Heart right ventricle (tissue), 16 donors: ENCODE measurements at regions of chr12 and their contacts with region 1.

Region 1: GRCh38 chr12:7933255-7933729 is 2.7 kb downstream of the SLC2A3 start:
- DNase-seq: peak; percentile 57 to 88
- ATAC-seq: peak; percentile 86 to 94 (median 91)
- H3K4me3 ChIP-seq: peak overlapping the region; percentile 34 to 77 (median 65)
- H3K27ac ChIP-seq: peak overlapping the region; percentile 17 to 99 (median 88)
- H3K4me1 ChIP-seq: peaks cover 0 to 69% (median 7%) of the 10 kb centered on the region in 9 donors
- H3K27me3 ChIP-seq: peaks cover 0 to 4% (median 0%) of the 10 kb centered on the region in 7 donors
- CTCF ChIP-seq: peak; percentile 49 to 86 (median 72)

Region 2: DNA sequence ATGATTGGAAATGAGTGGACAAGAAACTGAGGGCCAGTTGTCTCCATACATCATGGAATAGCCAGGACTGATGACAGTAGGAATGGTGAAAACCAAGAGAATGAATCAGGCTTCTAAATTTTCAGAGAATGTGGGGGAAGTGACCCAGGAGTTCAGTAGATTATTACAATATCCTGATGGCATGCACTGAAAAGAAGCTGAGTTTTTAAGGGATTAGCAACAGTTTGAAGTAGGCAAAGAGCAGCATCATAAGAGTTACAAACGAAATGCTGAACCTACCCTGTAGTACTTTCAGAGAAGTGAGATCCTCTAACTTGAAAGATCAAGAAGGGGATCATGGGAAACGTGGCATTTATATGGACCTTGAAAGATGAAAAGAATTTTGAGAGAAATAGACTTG is 73.7 kb before region 1 on chr12:
- intact Hi-C with region 1: loop called in 1 of 10 experiments (anchors 10 kb)
- DNase-seq: no peak
- ATAC-seq: no peak
- H3K4me3 ChIP-seq: no peak overlapping the region
- H3K27ac ChIP-seq: no peak overlapping the region
- H3K4me1 ChIP-seq: peaks cover 0 to 14% (median 3%) of the 10 kb centered on the region in 9 donors
- H3K27me3 ChIP-seq: peaks cover 0 to 38% (median 11%) of the 10 kb centered on the region in 7 donors
- CTCF ChIP-seq: no peak

Region 3: GRCh38 chr12:7872566-7873319 is 60.5 kb before region 1 on chr12 and contains the start of gene SLC2A14:
- intact Hi-C with region 1: no loop called
- DNase-seq: no peak
- ATAC-seq: peak in 1 of 8 donors; percentile 39
- H3K4me3 ChIP-seq: peak within 1 kb of the TSS in 6 of 10 donors; percentile 15 to 36 (median 26)
- H3K27ac ChIP-seq: no peak within 1 kb of the TSS
- H3K4me1 ChIP-seq: peaks cover 0 to 8% (median 0%) of the 10 kb centered on the region in 9 donors
- H3K27me3 ChIP-seq: peaks cover 0 to 50% (median 42%) of the 10 kb centered on the region in 7 donors
- CTCF ChIP-seq: no peak
- total RNA-seq, gene SLC2A14: 0.22 to 0.95 (median 0.39) TPM in 3 of 10 donors, not detected in the others

Region 4: DNA sequence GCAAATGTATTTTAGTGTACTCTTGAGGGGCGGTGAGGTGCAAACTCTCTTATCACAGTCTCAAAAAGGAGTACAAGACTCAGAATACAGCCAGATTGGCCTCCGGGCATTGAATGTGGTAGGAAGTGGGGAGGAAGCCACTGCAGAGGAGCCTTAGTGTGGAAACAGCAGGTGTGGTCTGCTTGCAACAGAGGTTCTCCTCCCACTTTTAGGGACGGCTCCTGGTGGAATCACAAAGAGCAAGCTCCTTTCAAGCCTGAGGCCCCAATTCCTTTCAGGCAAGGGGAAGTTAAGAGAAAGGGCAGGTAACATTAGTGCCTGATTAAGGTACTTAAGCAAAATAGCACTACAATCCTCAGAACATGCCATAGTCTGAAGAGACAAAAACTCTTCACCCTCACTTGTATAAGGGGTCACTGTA is 26.4 kb after region 1 on chr12:
- intact Hi-C with region 1: loop called in 3 of 10 experiments (anchors 1 kb)
- DNase-seq: no peak
- ATAC-seq: peak in 3 of 8 donors; percentile 21 to 28 (median 27)
- H3K4me3 ChIP-seq: peak overlapping the region in 2 of 10 donors; percentile 53 to 59
- H3K27ac ChIP-seq: peak overlapping the region in 4 of 10 donors; percentile 78 to 93 (median 85)
- H3K4me1 ChIP-seq: peaks cover 0 to 52% (median 4%) of the 10 kb centered on the region in 9 donors
- H3K27me3 ChIP-seq: no peaks in the 10 kb centered on the region
- CTCF ChIP-seq: no peak

Region 5: DNA sequence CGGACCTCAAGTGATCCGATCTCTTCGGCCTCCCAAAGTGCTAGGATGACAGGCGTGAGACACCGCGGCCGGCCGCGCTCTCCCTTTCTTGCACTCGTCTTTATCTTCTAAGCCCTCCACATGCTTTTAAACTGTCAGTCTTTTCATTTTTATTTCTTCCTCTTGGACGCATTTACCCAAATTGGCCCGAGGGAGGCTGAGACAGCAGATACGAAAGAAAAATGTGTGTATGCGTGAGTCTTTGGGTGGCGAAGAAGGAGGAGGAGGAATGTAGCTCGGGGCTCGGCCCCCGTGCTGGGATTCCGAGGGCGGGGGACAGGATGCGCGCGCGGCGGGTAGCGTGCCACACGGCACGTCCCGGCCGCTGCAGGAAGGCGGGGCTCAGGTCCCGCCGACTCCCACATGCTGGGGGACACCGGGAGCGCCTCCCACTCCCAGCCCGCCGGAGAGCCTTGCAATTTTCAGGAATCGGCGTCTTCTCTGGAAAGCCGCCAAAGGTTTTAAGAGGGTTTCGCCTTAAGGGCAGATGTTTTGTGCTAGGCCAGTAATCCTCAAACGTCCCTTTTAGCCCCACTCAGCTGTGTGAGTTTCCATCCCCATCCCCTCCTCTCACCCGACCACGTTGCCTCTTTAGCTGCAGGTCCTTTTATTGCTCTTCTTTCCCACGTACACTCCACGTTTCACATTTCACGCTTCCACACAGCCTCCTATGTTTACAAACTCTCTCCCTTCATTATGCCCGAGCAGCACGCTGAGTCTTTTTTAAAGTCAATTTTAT is 37.4 kb after region 1 on chr12:
- intact Hi-C with region 1: loop called in 5 of 10 experiments (anchors 1 to 5 kb)
- DNase-seq: peak; percentile 90
- ATAC-seq: peak; percentile 97 to 99 (median 98)
- H3K4me3 ChIP-seq: peak overlapping the region; percentile 41 to 65 (median 55)
- H3K27ac ChIP-seq: peak overlapping the region; percentile 79 to 94 (median 86)
- H3K4me1 ChIP-seq: peaks cover 0 to 39% (median 16%) of the 10 kb centered on the region in 9 donors
- H3K27me3 ChIP-seq: peaks cover 0 to 6% (median 0%) of the 10 kb centered on the region in 7 donors
- CTCF ChIP-seq: peak in 2 of 9 donors; percentile 15 to 18

Region 6: GRCh38 chr12:7995266-7995963 is 62.1 kb after region 1 on chr12:
- intact Hi-C with region 1: loop called (anchors 1 to 10 kb)
- DNase-seq: peak; percentile 61 to 89
- ATAC-seq: peak; percentile 95 to 100 (median 99)
- H3K4me3 ChIP-seq: no peak overlapping the region
- H3K27ac ChIP-seq: peak overlapping the region in 5 of 10 donors; percentile 18 to 71 (median 52)
- H3K4me1 ChIP-seq: peaks cover 0 to 40% (median 0%) of the 10 kb centered on the region in 9 donors
- H3K27me3 ChIP-seq: no peaks in the 10 kb centered on the region
- CTCF ChIP-seq: peak; percentile 77 to 91 (median 88)